ENCODE measurements at regions of chr10 and their contacts with region 1.

Region 1: GRCh38 chr10:93554760-93555432 is 11.6 kb upstream of the FFAR4 start:
- DNase-seq: peak; percentile 75 to 82 (median 76)
- ATAC-seq: peak; percentile 85
- H3K4me3 ChIP-seq: no peak overlapping the region
- H3K27ac ChIP-seq: no peak overlapping the region
- H3K4me1 ChIP-seq: no peaks in the 10 kb centered on the region
- H3K27me3 ChIP-seq: no peaks in the 10 kb centered on the region
- CTCF ChIP-seq: peak; percentile 62 to 73 (median 66)
- POLR2A ChIP-seq: no peak

Region 2: GRCh38 chr10:93672022-93672678 is 117.3 kb after region 1 on chr10:
- intact Hi-C with region 1: loop called (anchors 10 kb)
- DNase-seq: no peak
- ATAC-seq: no peak
- H3K4me3 ChIP-seq: no peak overlapping the region
- H3K27ac ChIP-seq: no peak overlapping the region
- H3K4me1 ChIP-seq: peaks cover 10% of the 10 kb centered on the region
- H3K27me3 ChIP-seq: no peaks in the 10 kb centered on the region
- CTCF ChIP-seq: no peak
- POLR2A ChIP-seq: no peak

Region 3: GRCh38 chr10:93859049-93859655 is 304.3 kb after region 1 on chr10:
- intact Hi-C with region 1: loop called (anchors 10 kb)
- DNase-seq: no peak
- ATAC-seq: no peak
- H3K4me3 ChIP-seq: no peak overlapping the region
- H3K27ac ChIP-seq: no peak overlapping the region
- H3K4me1 ChIP-seq: peaks cover 18% of the 10 kb centered on the region
- H3K27me3 ChIP-seq: no peaks in the 10 kb centered on the region
- CTCF ChIP-seq: peak; percentile 7 to 63 (median 57)
- POLR2A ChIP-seq: no peak